Aorta (tissue), 5 donors: ENCODE measurements at regions of chr1 and their contacts with region 1.

Region 1: GRCh38 chr1:201511941-201512539 is 5.1 kb upstream of the CSRP1 start:
- DNase-seq: peak; percentile 77 to 82
- ATAC-seq: peak; percentile 79
- H3K4me3 ChIP-seq: no peak overlapping the region
- H3K27ac ChIP-seq: peak overlapping the region in 1 of 2 donors; percentile 39
- H3K4me1 ChIP-seq: peaks cover 0 to 2% of the 10 kb centered on the region in 2 donors
- H3K27me3 ChIP-seq: no peaks in the 10 kb centered on the region

Region 2: DNA sequence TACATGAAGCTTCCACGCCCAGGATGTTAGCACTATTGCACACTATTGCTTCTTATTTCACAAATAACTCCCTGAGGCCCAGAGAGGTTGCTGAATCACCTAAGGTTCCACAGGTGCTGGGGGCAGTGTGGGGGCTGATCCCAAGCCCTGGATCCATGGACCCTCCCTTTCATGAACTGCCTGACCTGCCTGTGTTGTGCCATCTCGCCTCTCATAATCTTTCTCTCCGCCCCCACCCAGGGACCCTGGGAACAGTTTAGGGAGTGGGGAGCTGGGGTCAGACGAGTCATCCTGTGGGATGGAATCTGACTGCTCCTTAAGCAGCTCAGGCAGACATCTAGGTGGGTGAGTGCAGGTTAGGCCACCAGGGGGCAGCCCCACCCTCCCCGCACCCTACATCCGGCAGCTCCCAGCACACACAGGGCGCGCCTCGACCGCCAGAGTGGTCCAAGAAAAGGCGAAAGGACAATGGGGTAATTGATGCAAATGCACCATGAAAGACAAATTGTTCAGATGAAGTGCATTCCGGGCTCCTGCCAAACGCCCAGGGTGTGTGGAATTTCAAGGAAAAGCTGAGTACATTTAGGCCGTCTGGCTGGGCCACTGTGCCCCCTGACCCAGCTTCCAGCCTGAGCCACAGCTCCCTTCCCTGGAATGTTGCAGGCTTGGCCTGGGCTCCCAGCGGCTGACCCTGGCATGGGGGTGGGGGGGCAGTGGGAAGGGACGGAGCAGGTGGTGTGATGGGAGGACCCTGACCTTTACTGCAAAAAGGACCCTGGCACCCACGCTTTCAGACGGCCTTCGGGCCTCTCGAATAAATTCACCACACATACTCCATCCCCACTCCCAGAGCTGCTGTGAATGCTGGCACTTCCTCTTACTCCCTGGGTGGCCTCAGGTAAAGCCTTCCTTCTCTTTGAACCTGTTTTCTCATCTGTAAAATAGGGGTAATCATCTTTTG is 63.8 kb before region 1 on chr1:
- intact Hi-C with region 1: loop called (anchors 2 to 5 kb)
- DNase-seq: peak; percentile 80 to 91
- ATAC-seq: peak; percentile 83
- H3K4me3 ChIP-seq: no peak overlapping the region
- H3K27ac ChIP-seq: no peak overlapping the region
- H3K4me1 ChIP-seq: no peaks in the 10 kb centered on the region
- H3K27me3 ChIP-seq: no peaks in the 10 kb centered on the region

Region 3: GRCh38 chr1:201481761-201482493 is 30.1 kb before region 1 on chr1:
- intact Hi-C with region 1: loop called (anchors 1 to 2 kb)
- DNase-seq: peak; percentile 92 to 97
- ATAC-seq: peak; percentile 93
- H3K4me3 ChIP-seq: no peak overlapping the region
- H3K27ac ChIP-seq: peak overlapping the region in 1 of 2 donors; percentile 52
- H3K4me1 ChIP-seq: no peaks in the 10 kb centered on the region
- H3K27me3 ChIP-seq: no peaks in the 10 kb centered on the region

Region 4: DNA sequence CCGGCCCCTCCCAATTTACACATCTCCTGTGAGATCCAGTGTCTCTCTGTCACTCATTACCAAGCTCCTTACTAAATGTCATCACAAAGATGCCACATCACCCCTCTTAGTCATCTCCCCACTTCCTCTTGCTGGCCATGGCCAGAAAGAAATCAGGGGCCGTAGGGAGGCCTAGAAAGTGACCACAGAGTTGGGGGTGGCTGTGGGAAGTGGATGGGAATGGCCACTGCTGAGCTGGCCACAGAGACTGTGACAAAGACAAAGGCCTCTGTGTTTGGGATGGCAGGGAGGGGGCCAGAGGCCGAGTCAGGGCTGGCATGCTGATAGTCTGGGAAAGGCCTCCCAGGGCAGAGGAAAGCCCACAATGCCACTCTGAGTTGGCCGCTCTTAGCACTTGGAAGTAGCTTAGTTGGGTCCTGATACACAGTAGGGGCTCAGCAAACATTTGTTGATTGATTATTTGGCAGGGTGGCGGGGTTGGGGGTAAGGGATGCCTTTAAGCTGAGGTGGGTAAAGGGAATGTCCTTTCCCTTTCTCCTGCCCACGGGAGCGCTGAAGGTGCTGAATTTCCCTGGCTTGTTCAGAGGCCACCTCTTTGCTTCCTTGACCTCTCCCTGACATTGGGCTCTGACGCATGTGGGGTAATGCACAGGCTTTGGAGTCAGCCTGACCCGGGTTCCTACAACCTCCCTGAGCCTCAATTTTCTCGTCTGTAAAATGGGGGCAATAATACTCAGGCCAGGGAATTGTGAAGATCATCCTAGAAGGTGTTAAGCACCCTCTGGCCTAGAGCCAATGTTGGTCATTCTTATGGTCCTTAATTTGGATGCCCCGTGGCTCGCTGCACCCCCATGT is 40.1 kb after region 1 on chr1:
- intact Hi-C with region 1: no loop called
- DNase-seq: no peak
- ATAC-seq: no peak
- H3K4me3 ChIP-seq: no peak overlapping the region
- H3K27ac ChIP-seq: no peak overlapping the region
- H3K4me1 ChIP-seq: no peaks in the 10 kb centered on the region
- H3K27me3 ChIP-seq: no peaks in the 10 kb centered on the region